Endothelial cell of umbilical vein (primary cell): ENCODE measurements at regions of chr5 and their contacts with region 1.

Region 1: DNA sequence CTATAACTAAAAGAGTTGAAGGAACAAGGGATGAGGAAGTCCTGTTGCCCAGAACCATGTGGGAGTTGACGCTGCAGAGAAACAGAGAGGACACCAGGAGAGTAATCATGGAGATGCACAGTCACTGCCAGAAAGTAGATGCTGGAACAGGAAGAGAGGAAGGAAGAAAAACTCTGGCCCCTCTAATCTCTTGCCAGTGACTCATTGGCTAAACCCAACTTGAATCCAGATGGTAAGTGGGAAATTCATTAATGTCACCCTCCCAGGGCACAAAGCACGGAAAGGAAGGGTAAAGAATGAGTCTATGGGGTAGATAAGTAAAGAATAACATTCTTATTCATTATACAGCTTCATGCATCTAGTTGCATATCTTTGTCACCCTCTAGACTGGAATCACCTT is 631.9 kb downstream of the PRELID2 start:
- DNase-seq: peak; percentile 75
- H3K4me3 ChIP-seq: no peak overlapping the region
- H3K27ac ChIP-seq: peak overlapping the region; percentile 11
- H3K4me1 ChIP-seq: peaks cover 18% of the 10 kb centered on the region
- H3K27me3 ChIP-seq: no peaks in the 10 kb centered on the region
- CTCF ChIP-seq: no peak
- POLR2A ChIP-seq: no peak

Region 2: GRCh38 chr5:145130996-145131395 is 72.2 kb before region 1 on chr5:
- CTCF ChIA-PET with region 1: no interaction called
- POLR2A ChIA-PET with region 1: no interaction called
- dilution Hi-C with region 1: no loop called
- intact Hi-C with region 1: no loop called
- DNase-seq: no peak
- H3K4me3 ChIP-seq: no peak overlapping the region
- H3K27ac ChIP-seq: no peak overlapping the region
- H3K4me1 ChIP-seq: no peaks in the 10 kb centered on the region
- H3K27me3 ChIP-seq: no peaks in the 10 kb centered on the region
- CTCF ChIP-seq: no peak
- POLR2A ChIP-seq: no peak

Region 3: GRCh38 chr5:145347026-145347616 is 143.9 kb after region 1 on chr5:
- CTCF ChIA-PET with region 1: interaction called, 3 read pairs
- POLR2A ChIA-PET with region 1: no interaction called
- dilution Hi-C with region 1: no loop called
- intact Hi-C with region 1: loop called (anchors 5 kb)
- DNase-seq: peak; percentile 64
- H3K4me3 ChIP-seq: no peak overlapping the region
- H3K27ac ChIP-seq: no peak overlapping the region
- H3K4me1 ChIP-seq: peaks cover 21% of the 10 kb centered on the region
- H3K27me3 ChIP-seq: no peaks in the 10 kb centered on the region
- CTCF ChIP-seq: peak; percentile 50 to 64
- POLR2A ChIP-seq: no peak